ENCODE measurements at regions of chr19 and their contacts with region 1.

Region 1: DNA sequence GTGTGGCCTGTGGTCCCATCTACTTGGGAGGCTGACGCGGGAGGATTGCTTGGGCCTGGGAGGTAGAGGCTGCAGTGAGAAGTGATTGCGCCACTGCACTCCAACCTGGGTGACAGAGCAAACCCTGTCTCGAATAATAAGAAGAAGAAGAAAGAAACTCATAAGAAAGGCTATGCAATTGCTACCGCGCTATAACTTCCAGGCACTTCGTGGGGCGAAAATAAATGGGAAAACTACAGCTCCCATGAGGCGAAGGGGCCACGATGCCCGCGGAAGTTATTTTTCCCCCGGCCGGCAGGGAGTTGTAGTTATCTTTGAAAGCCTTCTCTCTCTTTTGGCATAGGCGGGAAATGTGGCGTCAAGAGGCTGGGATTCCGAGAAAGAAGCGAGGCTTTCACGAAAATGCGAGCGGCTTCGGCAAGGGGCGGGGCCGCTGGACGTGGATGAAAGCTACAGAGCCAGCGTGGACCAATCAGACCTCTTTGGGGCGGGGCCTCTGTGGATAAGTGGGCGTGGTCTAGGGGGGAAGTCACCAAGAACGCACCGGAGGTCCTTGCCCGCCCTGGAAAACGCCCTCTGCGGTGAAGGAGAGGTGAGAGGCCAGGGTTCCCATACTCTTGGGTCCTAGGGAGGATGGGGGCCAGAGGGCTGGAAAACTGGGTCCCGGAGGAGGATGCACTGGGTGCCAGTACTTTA is at the start of gene NUCB1:
- DNase-seq: peak; percentile 92 to 99 (median 98)
- ATAC-seq: peak; percentile 100
- H3K4me3 ChIP-seq: peak within 1 kb of the TSS; percentile 92
- H3K4me3 Mint-ChIP-seq: peak within 1 kb of the TSS; percentile 87 to 100 (median 98)
- H3K27ac ChIP-seq: peak within 1 kb of the TSS; percentile 92
- H3K27ac Mint-ChIP-seq: peak within 1 kb of the TSS; percentile 78 to 100 (median 98)
- H3K4me1 ChIP-seq: peaks cover 11 to 12% of the 10 kb centered on the region in 2 donors
- H3K4me1 Mint-ChIP-seq: peaks cover 14 to 44% (median 32%) of the 10 kb centered on the region in 7 donors
- H3K27me3 ChIP-seq: peaks cover 2 to 4% of the 10 kb centered on the region in 2 donors
- H3K27me3 Mint-ChIP-seq: peaks cover under 1 to 11% (median 2%) of the 10 kb centered on the region in 5 donors
- total RNA-seq, gene NUCB1: 128 to 252 (median 142) TPM

Region 2: GRCh38 chr19:48568345-48568886 is 331.5 kb before region 1 on chr19:
- CTCF ChIA-PET with region 1: no interaction called
- POLR2A ChIA-PET with region 1: no interaction called
- intact Hi-C with region 1: no loop called
- DNase-seq: no peak
- ATAC-seq: no peak
- H3K4me3 ChIP-seq: no peak overlapping the region
- H3K4me3 Mint-ChIP-seq: no peak overlapping the region
- H3K27ac ChIP-seq: no peak overlapping the region
- H3K27ac Mint-ChIP-seq: no peak overlapping the region
- H3K4me1 ChIP-seq: no peaks in the 10 kb centered on the region
- H3K4me1 Mint-ChIP-seq: no peaks in the 10 kb centered on the region
- H3K27me3 ChIP-seq: no peaks in the 10 kb centered on the region
- H3K27me3 Mint-ChIP-seq: peaks cover 0 to 6% (median 3%) of the 10 kb centered on the region in 5 donors

Region 3: GRCh38 chr19:48835734-48836088 is 64.2 kb before region 1 on chr19:
- CTCF ChIA-PET with region 1: no interaction called
- POLR2A ChIA-PET with region 1: no interaction called
- intact Hi-C with region 1: loop called (anchors 1 to 5 kb)
- DNase-seq: peak; percentile 81 to 93 (median 89)
- ATAC-seq: peak; percentile 95
- H3K4me3 ChIP-seq: peak overlapping the region; percentile 53
- H3K4me3 Mint-ChIP-seq: peak overlapping the region; percentile 85 to 94 (median 90)
- H3K27ac ChIP-seq: peak overlapping the region; percentile 54
- H3K27ac Mint-ChIP-seq: peak overlapping the region; percentile 48 to 96 (median 86)
- H3K4me1 ChIP-seq: peaks cover 12 to 16% of the 10 kb centered on the region in 2 donors
- H3K4me1 Mint-ChIP-seq: peaks cover 16 to 25% (median 23%) of the 10 kb centered on the region in 7 donors
- H3K27me3 ChIP-seq: peaks cover 0 to 5% of the 10 kb centered on the region in 2 donors
- H3K27me3 Mint-ChIP-seq: peaks cover 0 to 11% (median 0%) of the 10 kb centered on the region in 5 donors

Region 4: GRCh38 chr19:48872182-48872883 is 27.6 kb before region 1 on chr19 and contains the start of gene PPP1R15A:
- CTCF ChIA-PET with region 1: interaction called, 4 read pairs
- POLR2A ChIA-PET with region 1: interaction called, 13 read pairs
- intact Hi-C with region 1: loop called (anchors 1 kb)
- DNase-seq: peak; percentile 96 to 99 (median 98)
- ATAC-seq: peak; percentile 58
- H3K4me3 ChIP-seq: peak within 1 kb of the TSS; percentile 86
- H3K4me3 Mint-ChIP-seq: peak within 1 kb of the TSS; percentile 94 to 100 (median 98)
- H3K27ac ChIP-seq: peak within 1 kb of the TSS; percentile 99
- H3K27ac Mint-ChIP-seq: peak within 1 kb of the TSS; percentile 94 to 100 (median 99)
- H3K4me1 ChIP-seq: peaks cover 34 to 36% of the 10 kb centered on the region in 2 donors
- H3K4me1 Mint-ChIP-seq: peaks cover 31 to 51% (median 41%) of the 10 kb centered on the region in 7 donors
- H3K27me3 ChIP-seq: no peaks in the 10 kb centered on the region
- H3K27me3 Mint-ChIP-seq: peaks cover 0 to 14% (median 0%) of the 10 kb centered on the region in 5 donors
- total RNA-seq, gene PPP1R15A: 31.5 to 1,030 (median 71.9) TPM

Region 5: DNA sequence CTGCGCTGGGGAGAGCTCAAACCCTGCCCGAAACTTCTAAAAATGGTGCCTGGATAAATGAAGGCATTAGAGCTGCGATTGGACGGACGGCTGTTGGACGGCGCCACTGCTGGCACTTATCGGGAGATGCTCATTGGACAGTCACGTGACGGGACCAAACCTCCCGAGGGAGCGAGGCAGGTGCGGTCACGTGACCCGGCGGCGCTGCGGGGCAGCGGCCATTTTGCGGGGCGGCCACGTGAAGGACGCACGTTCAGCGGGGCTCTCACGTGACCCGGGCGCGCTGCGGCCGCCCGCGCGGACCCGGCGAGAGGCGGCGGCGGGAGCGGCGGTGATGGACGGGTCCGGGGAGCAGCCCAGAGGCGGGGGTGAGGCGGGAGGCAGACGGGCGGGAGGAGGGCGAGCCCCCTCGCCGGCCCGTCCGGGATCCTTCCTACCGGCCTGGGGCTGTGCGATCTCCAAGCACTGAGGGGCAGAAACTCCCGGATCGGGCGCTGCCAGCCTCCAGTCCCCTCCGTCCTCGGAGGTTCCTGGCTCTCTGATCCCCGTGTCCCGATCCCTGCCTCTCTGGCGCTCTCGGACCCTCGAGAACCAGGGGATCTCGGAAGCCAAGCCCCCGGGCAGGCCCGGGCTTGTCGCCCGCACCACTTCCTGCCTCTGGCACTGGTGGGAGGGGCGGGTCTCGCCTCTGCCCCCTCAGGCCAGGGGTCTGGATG is 54.8 kb after region 1 on chr19 and contains the start of gene BAX:
- CTCF ChIA-PET with region 1: no interaction called
- POLR2A ChIA-PET with region 1: interaction called, 4 read pairs
- intact Hi-C with region 1: loop called (anchors 1 to 2 kb)
- DNase-seq: peak; percentile 59 to 96 (median 71)
- ATAC-seq: peak; percentile 92
- H3K4me3 ChIP-seq: peak within 1 kb of the TSS; percentile 65
- H3K4me3 Mint-ChIP-seq: peak within 1 kb of the TSS; percentile 88 to 95 (median 94)
- H3K27ac ChIP-seq: peak within 1 kb of the TSS; percentile 85
- H3K27ac Mint-ChIP-seq: peak within 1 kb of the TSS; percentile 77 to 94 (median 91)
- H3K4me1 ChIP-seq: peaks cover 12 to 19% of the 10 kb centered on the region in 2 donors
- H3K4me1 Mint-ChIP-seq: peaks cover 26 to 46% (median 38%) of the 10 kb centered on the region in 7 donors
- H3K27me3 ChIP-seq: no peaks in the 10 kb centered on the region
- H3K27me3 Mint-ChIP-seq: peaks cover 0 to 2% (median 0%) of the 10 kb centered on the region in 5 donors
- total RNA-seq, gene BAX: 78.7 to 355 (median 122) TPM

Region 6: GRCh38 chr19:49085020-49085867 is 185.3 kb after region 1 on chr19 and contains the start of gene SNRNP70:
- CTCF ChIA-PET with region 1: no interaction called
- POLR2A ChIA-PET with region 1: no interaction called
- intact Hi-C with region 1: loop called (anchors 1 kb)
- DNase-seq: peak; percentile 99 to 100 (median 100)
- ATAC-seq: peak; percentile 97
- H3K4me3 ChIP-seq: peak within 1 kb of the TSS; percentile 72
- H3K4me3 Mint-ChIP-seq: peak within 1 kb of the TSS; percentile 71 to 97 (median 94)
- H3K27ac ChIP-seq: peak within 1 kb of the TSS; percentile 94
- H3K27ac Mint-ChIP-seq: peak within 1 kb of the TSS; percentile 83 to 96 (median 88)
- H3K4me1 ChIP-seq: peaks cover 19% of the 10 kb centered on the region in 2 donors
- H3K4me1 Mint-ChIP-seq: peaks cover 18 to 49% (median 35%) of the 10 kb centered on the region in 7 donors
- H3K27me3 ChIP-seq: no peaks in the 10 kb centered on the region
- H3K27me3 Mint-ChIP-seq: peaks cover 0 to 5% (median 4%) of the 10 kb centered on the region in 5 donors
- total RNA-seq, gene SNRNP70: 243 to 837 (median 449) TPM